Activated CD8-positive, alpha-beta T cell treated with anti-CD3 and anti-CD28 coated beads, Interleukin-2, amount 10 ng/mL, durations not matched to agents 7 days and 5 days (primary cell): ENCODE measurements at regions of chr16 and their contacts with region 1.

Region 1: DNA sequence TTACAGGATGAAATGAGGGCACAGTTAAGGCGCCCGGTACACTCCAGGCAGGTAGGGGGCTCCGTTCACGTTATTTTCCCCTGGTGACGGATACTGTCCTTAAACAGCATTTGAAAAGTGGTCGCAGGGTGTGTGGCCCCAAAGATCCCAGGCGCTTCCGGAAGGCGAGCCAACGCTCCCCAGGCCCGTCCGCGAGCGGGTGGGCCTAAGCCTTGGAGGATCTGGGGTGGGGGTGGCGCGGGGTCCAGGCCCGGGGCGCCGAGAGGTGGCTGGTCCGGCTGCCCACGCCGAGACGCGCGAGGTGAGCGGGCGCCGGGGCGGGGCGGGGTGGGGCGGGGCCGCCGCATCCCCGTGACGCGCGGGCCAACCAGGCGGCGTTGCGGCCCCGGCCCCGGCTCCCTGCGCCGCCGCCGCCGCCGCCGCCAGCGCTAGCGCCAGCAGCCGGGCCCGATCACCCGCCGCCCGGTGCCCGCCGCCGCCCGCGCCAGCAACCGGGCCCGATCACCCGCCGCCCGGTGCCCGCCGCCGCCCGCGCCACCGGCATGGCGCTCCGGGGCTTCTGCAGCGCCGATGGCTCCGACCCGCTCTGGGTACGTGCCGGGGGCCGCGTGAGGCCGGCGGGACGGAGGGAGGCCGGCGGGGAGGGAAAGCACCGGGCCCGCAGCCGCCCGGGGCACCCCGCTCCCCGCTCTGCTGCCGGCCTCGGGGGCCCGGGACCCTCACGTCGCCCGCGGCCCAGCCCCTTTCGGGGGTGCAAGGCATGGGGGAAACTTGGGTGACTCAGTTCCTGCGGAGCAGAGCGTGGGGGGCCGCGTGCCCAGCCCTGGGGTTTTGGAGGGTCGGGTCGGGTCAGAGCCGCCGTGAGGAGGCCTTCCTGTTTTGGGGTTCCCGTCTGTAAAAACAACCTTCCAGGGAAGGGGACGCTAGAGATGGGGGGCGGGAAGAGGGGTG is at the start of gene ABCC1:
- DNase-seq: peak; percentile 56
- ATAC-seq: peak; percentile 80
- H3K4me3 Mint-ChIP-seq: peak within 1 kb of the TSS; percentile 96
- H3K27ac Mint-ChIP-seq: peak within 1 kb of the TSS; percentile 96
- H3K4me1 Mint-ChIP-seq: peaks cover 37% of the 10 kb centered on the region
- H3K27me3 Mint-ChIP-seq: no peaks in the 10 kb centered on the region
- total RNA-seq, gene ABCC1: 46.0 to 46.9 TPM

Region 2: DNA sequence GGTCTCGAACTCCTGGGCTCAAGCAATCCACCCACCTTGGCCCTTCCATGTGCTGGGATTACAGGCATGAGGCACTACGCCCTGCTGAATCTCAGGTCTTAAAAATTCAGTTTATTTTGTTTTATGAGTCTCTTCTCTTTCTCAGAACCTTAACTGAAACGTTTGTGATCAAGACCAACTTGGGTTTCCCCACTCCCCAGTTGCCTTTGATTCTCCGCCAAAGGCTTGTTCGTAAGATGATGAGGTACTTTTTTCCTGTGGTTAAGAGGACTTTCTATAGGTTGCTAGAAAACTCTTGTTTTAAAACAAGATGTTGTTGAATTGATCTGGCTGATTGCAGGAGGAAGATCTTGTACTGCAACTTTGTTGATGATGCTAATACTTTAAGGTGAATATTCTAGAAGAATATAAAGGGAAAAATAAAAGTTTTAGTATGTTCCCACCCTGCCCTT is 11.6 kb after region 1 on chr16:
- CTCF ChIA-PET with region 1: interaction called, 13 read pairs
- POLR2A ChIA-PET with region 1: interaction called, 29 read pairs
- DNase-seq: peak; percentile 83
- ATAC-seq: peak; percentile 83
- H3K4me3 Mint-ChIP-seq: peak overlapping the region; percentile 80
- H3K27ac Mint-ChIP-seq: peak overlapping the region; percentile 97
- H3K4me1 Mint-ChIP-seq: peaks cover 72% of the 10 kb centered on the region
- H3K27me3 Mint-ChIP-seq: no peaks in the 10 kb centered on the region